ENCODE measurements at regions of chr10 and their contacts with region 1.

Region 1: DNA sequence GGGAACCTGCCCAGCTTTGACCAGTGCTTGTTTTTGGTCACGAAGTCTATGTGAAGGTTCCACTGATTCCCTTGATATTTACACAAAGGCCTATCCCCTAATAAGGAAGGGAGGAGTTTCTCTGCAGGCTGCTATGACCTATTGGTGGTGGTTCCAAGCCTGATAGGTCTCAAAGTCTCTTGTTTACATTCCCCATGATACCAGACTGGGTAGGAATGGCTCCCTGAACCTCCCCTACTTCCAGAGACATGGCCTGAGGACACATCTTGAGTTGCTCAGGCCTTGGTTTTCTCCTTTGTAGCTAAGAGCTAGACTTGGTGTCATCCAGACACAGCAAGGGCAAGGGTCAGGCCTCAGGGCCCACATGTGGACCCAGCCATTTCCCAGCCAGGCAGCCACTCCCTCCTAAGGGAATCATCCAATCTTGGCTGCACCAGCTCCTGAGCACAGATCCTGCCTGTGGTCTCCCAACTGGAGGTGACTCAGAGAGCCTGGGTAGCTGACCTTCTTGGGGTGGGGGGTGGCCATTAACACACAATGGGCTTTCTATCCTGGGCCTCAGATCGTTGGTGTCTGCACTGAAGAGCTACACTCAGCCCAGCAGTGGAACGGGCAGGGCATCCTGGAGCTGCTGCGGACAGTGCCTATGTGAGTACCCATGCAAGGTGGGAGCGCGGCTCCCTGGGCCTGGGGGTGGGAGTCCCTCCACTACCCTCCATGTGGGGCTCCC is 51.0 kb upstream of the TRIM8 start:
- DNase-seq: no peak
- ATAC-seq: no peak
- H3K4me3 ChIP-seq: no peak overlapping the region
- H3K27ac ChIP-seq: no peak overlapping the region
- H3K4me1 ChIP-seq: no peaks in the 10 kb centered on the region
- H3K27me3 ChIP-seq: no peaks in the 10 kb centered on the region
- CTCF ChIP-seq: no peak

Region 2: GRCh38 chr10:102524746-102525145 is 68.5 kb before region 1 on chr10:
- CTCF ChIA-PET with region 1: no interaction called
- POLR2A ChIA-PET with region 1: no interaction called
- in situ Hi-C with region 1: no loop called
- intact Hi-C with region 1: loop called (anchors 5 kb)
- DNase-seq: no peak
- ATAC-seq: no peak
- H3K4me3 ChIP-seq: no peak overlapping the region
- H3K27ac ChIP-seq: no peak overlapping the region
- H3K4me1 ChIP-seq: no peaks in the 10 kb centered on the region
- H3K27me3 ChIP-seq: no peaks in the 10 kb centered on the region
- CTCF ChIP-seq: no peak

Region 3: DNA sequence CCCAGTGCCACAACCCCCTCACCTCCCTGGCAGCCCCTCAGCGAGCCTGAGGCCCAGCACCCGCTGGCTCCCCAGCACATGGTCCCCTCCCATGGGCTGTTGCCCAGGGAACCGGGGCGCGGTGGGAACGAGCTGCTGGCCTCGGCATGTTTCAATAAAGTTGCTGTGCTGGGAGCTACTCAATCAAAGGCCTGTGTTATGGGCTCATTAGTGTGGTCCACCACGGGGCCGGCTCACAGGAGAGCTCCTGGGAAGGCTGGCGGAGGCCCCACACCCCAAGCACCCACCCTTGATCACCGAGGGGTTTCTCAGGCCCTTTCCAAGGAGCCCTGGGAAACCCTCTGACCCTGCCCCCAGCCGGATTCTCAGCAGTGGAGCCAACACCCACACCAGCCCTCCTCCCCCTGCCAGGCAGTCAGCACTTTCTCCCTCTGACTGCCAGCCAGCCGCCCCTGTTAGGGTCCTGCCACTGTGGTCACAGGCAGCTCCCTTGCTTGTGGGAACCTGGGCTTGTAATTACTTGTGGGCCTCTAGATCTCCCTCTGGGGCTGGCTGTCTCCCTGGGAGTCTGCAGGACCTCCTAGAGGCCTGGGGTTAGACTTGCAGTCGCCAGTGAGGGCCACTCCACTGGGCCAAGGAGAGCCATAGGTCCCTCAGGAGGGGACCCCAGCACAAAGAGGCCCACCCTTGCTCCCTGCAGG is 26.2 kb after region 1 on chr10:
- CTCF ChIA-PET with region 1: interaction called, 11 read pairs
- POLR2A ChIA-PET with region 1: no interaction called
- in situ Hi-C with region 1: no loop called
- intact Hi-C with region 1: no loop called
- DNase-seq: no peak
- ATAC-seq: no peak
- H3K4me3 ChIP-seq: no peak overlapping the region
- H3K27ac ChIP-seq: no peak overlapping the region
- H3K4me1 ChIP-seq: peaks cover 7% of the 10 kb centered on the region
- H3K27me3 ChIP-seq: no peaks in the 10 kb centered on the region
- CTCF ChIP-seq: no peak